CD8-positive, alpha-beta T cell (primary cell): ENCODE measurements at regions of chr5 and their contacts with region 1.

Region 1: DNA sequence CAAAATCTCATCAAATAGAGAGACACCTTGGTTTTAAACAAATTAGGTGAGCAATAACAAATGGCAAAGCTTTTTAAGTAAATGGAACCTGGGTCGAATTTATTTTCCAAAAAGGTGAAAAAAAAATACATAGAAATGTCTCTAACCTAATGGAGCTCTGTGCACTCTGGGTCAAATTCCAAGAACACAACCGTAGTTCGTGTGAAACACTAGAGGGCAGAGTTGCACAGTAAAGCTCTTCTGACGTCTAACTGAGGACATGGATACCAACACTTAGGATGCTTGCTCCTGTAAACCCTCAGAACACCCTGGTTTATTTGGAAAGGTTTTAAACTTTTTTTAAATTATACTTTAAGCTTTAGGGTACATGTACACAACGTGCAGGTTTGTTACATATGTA is 18.9 kb downstream of the MARCHF11 start:
- DNase-seq: peak in 2 of 9 experiments; percentile 16 to 36
- ATAC-seq: no peak
- H3K4me3 ChIP-seq: no peak overlapping the region
- H3K4me3 Mint-ChIP-seq: no peak overlapping the region
- H3K27ac ChIP-seq: no peak overlapping the region
- H3K27ac Mint-ChIP-seq: no peak overlapping the region
- H3K4me1 ChIP-seq: no peaks in the 10 kb centered on the region
- H3K4me1 Mint-ChIP-seq: no peaks in the 10 kb centered on the region
- H3K27me3 ChIP-seq: no peaks in the 10 kb centered on the region
- H3K27me3 Mint-ChIP-seq: peaks cover 2% of the 10 kb centered on the region
- CTCF ChIP-seq: peak; percentile 39

Region 2: GRCh38 chr5:16456103-16456832 is 295.6 kb after region 1 on chr5:
- CTCF ChIA-PET with region 1: interaction called, 6 read pairs
- POLR2A ChIA-PET with region 1: no interaction called
- intact Hi-C with region 1: loop called in 1 of 2 experiments (anchors 5 kb)
- DNase-seq: peak in 4 of 9 experiments; percentile 20 to 80 (median 51)
- ATAC-seq: peak; percentile 76
- H3K4me3 ChIP-seq: no peak overlapping the region
- H3K4me3 Mint-ChIP-seq: peak overlapping the region; percentile 29
- H3K27ac ChIP-seq: peak overlapping the region in 1 of 2 experiments; percentile 41
- H3K27ac Mint-ChIP-seq: peak overlapping the region; percentile 65
- H3K4me1 ChIP-seq: peaks cover 38% of the 10 kb centered on the region
- H3K4me1 Mint-ChIP-seq: peaks cover 67% of the 10 kb centered on the region
- H3K27me3 ChIP-seq: no peaks in the 10 kb centered on the region
- H3K27me3 Mint-ChIP-seq: no peaks in the 10 kb centered on the region
- CTCF ChIP-seq: peak; percentile 77

Region 3: GRCh38 chr5:16673241-16674201 is 512.8 kb after region 1 on chr5:
- CTCF ChIA-PET with region 1: no interaction called
- POLR2A ChIA-PET with region 1: no interaction called
- intact Hi-C with region 1: loop called in 1 of 2 experiments (anchors 10 kb)
- DNase-seq: peak in 8 of 9 experiments; percentile 14 to 71 (median 56)
- ATAC-seq: peak; percentile 61
- H3K4me3 ChIP-seq: peak overlapping the region in 1 of 2 experiments; percentile 20
- H3K4me3 Mint-ChIP-seq: peak overlapping the region; percentile 35
- H3K27ac ChIP-seq: no peak overlapping the region
- H3K27ac Mint-ChIP-seq: peak overlapping the region; percentile 42
- H3K4me1 ChIP-seq: peaks cover 13% of the 10 kb centered on the region
- H3K4me1 Mint-ChIP-seq: peaks cover 14% of the 10 kb centered on the region
- H3K27me3 ChIP-seq: no peaks in the 10 kb centered on the region
- H3K27me3 Mint-ChIP-seq: no peaks in the 10 kb centered on the region
- CTCF ChIP-seq: no peak